ENCODE measurements at regions of chr18 and their contacts with region 1.

Region 1: GRCh38 chr18:75209129-75209950 is at the start of gene PTGR3:
- DNase-seq: peak; percentile 90
- H3K4me3 Mint-ChIP-seq: peak within 1 kb of the TSS; percentile 98
- H3K27ac Mint-ChIP-seq: peak within 1 kb of the TSS; percentile 92
- H3K4me1 Mint-ChIP-seq: peaks cover 40% of the 10 kb centered on the region
- H3K27me3 Mint-ChIP-seq: no peaks in the 10 kb centered on the region
- CTCF ChIP-seq: no peak
- total RNA-seq, gene PTGR3: 19.8 and 20.6 TPM in 2 replicates

Region 2: DNA sequence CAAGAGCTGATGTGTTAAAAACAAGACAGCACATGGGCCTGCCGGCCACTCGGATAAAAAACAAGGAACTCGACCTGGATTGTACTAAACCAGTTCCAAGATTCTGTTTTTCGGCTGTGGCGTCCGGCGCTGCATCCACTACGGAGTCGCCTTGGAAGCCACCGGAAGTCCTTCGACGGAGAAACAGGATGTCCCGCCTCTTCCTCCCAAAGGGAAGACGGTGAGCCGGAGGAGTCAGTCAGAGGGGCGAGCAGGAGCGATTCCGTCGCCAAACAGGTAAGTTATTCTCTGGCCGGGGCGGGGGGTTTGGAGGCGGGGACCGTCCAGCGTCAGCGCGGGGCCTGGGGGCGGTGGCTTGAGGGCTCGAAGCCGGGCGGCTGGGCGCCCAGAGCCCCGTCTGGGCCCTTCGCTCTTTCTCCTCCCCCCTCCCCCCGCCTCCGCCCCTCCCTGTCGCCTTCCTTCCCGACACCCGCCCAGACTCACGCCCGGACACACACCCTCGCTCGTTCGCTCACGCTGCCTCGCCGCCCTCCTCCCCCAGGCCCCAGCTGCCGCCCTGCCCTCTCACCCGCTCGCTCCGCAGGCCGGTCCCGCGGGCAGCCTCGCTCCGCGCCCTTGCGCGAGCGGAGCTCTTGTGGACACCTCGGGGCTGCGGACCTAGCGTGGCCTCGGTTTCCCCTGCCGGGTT is 611.5 kb before region 1 on chr18 and contains the start of gene ZNF407:
- CTCF ChIA-PET with region 1: no interaction called
- POLR2A ChIA-PET with region 1: interaction called, 28 read pairs
- intact Hi-C with region 1: no loop called
- DNase-seq: peak; percentile 93
- H3K4me3 Mint-ChIP-seq: peak within 1 kb of the TSS; percentile 85
- H3K27ac Mint-ChIP-seq: peak within 1 kb of the TSS; percentile 99
- H3K4me1 Mint-ChIP-seq: no peaks in the 10 kb centered on the region
- H3K27me3 Mint-ChIP-seq: no peaks in the 10 kb centered on the region
- CTCF ChIP-seq: no peak
- total RNA-seq, gene ZNF407: 9.5 and 9.9 TPM in 2 replicates

Region 3: DNA sequence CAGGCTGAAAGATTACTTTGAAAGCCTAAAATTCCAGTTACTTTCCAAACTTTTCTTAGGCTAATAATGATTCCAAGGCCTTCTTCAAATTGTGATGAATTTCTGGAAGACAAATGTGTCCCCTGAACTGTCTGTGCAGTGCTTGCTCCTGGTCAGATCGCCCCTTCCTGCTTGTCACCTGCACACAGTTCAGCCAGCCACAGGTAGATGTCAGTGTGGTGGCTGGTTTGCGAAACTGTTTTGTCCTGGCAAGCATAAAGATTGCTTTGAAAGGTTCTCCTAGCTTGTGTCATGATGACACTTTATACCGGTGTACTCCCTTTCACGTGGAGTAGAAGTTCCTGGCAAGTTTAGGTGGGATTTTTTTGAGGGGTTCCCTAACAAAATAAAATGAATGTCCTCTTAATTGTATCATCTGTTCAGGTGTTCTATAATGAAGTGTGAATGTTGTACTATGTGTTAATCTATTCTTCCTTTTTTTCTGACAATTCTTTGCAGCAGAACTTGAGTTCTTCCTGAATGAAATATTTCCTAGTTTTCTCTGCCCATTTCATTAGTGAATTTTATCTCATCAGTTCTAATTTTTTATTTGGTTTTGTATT is 312.8 kb before region 1 on chr18:
- CTCF ChIA-PET with region 1: interaction called, 3 read pairs
- POLR2A ChIA-PET with region 1: interaction called, 4 read pairs
- intact Hi-C with region 1: loop called (anchors 10 kb)
- DNase-seq: peak; percentile 60
- H3K4me3 Mint-ChIP-seq: no peak overlapping the region
- H3K27ac Mint-ChIP-seq: no peak overlapping the region
- H3K4me1 Mint-ChIP-seq: peaks cover 19% of the 10 kb centered on the region
- H3K27me3 Mint-ChIP-seq: no peaks in the 10 kb centered on the region
- CTCF ChIP-seq: peak; percentile 52

Region 4: DNA sequence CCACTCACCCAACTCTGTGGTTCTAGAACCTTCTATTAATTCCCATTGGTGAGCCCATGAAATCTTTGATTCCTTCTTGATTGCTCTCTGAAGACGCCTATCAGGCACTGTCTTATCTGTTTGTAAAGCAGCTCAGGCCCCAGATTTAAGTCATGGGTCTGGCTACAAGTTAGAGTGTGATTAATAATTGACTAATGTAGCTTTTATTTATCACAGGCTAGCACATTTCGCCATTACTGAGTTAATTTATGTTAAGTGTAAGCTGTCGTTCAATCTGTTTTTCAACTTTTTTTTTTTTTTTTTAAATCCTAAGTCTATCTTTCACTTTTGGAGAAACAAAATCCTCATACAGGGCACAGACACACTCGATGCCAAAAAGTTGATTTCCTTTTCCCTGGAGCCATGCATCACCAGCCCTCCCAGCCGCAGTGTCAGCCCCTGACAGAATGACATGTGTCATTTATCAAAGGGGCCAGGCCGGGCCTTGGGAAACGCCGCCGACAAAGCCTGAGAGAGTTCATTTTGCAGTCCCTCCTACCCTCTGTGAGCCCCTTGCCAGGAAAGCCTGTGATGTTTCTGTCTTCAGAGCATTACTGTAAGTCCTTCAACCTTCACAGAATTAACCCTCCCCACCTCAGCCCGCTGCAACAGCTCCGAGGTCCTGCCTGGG is 17.1 kb after region 1 on chr18:
- CTCF ChIA-PET with region 1: interaction called, 3 read pairs
- POLR2A ChIA-PET with region 1: interaction called, 10 read pairs
- intact Hi-C with region 1: no loop called
- DNase-seq: no peak
- H3K4me3 Mint-ChIP-seq: no peak overlapping the region
- H3K27ac Mint-ChIP-seq: no peak overlapping the region
- H3K4me1 Mint-ChIP-seq: peaks cover 5% of the 10 kb centered on the region
- H3K27me3 Mint-ChIP-seq: no peaks in the 10 kb centered on the region
- CTCF ChIP-seq: no peak

Region 5: GRCh38 chr18:75358928-75359327 is 149.6 kb after region 1 on chr18:
- CTCF ChIA-PET with region 1: no interaction called
- POLR2A ChIA-PET with region 1: no interaction called
- intact Hi-C with region 1: no loop called
- DNase-seq: peak; percentile 17
- H3K4me3 Mint-ChIP-seq: no peak overlapping the region
- H3K27ac Mint-ChIP-seq: no peak overlapping the region
- H3K4me1 Mint-ChIP-seq: no peaks in the 10 kb centered on the region
- H3K27me3 Mint-ChIP-seq: peaks cover 11% of the 10 kb centered on the region
- CTCF ChIP-seq: no peak

Region 6: GRCh38 chr18:75408554-75409506 is 199.5 kb after region 1 on chr18:
- CTCF ChIA-PET with region 1: no interaction called
- POLR2A ChIA-PET with region 1: no interaction called
- intact Hi-C with region 1: loop called (anchors 2 kb)
- DNase-seq: peak; percentile 98
- H3K4me3 Mint-ChIP-seq: no peak overlapping the region
- H3K27ac Mint-ChIP-seq: peak overlapping the region; percentile 64
- H3K4me1 Mint-ChIP-seq: peaks cover 20% of the 10 kb centered on the region
- H3K27me3 Mint-ChIP-seq: no peaks in the 10 kb centered on the region
- CTCF ChIP-seq: no peak

Region 7: DNA sequence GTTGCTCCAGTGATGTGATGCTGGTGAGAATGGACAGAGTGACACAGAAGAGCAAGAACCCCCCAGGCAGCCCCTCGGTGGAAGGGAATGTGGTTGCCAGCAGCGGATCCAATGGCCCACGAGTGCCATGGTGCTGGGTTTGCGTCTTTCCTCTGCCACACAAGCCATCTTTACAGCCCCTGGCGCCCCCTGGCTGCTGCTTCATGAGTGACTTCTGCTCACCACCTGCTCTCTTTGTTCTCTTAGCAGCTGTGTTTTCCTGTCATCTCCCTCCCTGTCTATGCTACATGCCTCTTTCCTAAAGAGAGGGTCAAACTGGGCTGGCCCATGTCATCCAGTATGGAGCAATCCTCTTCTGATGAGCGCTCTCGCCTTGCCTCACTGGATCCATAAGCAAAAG is 518.1 kb after region 1 on chr18:
- CTCF ChIA-PET with region 1: no interaction called
- POLR2A ChIA-PET with region 1: no interaction called
- intact Hi-C with region 1: loop called (anchors 5 kb)
- DNase-seq: peak; percentile 69
- H3K4me3 Mint-ChIP-seq: no peak overlapping the region
- H3K27ac Mint-ChIP-seq: no peak overlapping the region
- H3K4me1 Mint-ChIP-seq: no peaks in the 10 kb centered on the region
- H3K27me3 Mint-ChIP-seq: no peaks in the 10 kb centered on the region
- CTCF ChIP-seq: peak; percentile 45

Region 8: DNA sequence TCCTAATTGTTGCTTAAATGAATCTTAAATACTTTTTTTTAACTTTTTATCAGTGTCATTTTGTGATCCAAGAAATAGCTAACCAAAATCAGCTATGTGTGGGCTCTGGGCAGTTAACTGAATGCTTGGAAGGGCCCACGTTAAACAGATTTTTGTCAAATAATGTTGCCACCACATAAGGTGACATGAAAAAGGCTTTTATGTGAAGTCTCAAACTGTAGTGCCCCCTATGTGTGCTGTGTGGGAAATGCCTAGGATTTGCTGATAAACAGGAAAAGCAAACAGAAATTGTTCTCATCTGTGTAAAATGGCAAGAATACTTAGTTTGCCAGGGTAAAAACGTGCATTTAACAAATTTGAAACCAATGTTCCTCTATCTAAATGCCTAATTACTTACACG is 1043.5 kb after region 1 on chr18:
- CTCF ChIA-PET with region 1: interaction called, 3 read pairs
- POLR2A ChIA-PET with region 1: interaction called, 3 read pairs
- intact Hi-C with region 1: loop called (anchors 2 kb)
- DNase-seq: peak; percentile 36
- H3K4me3 Mint-ChIP-seq: no peak overlapping the region
- H3K27ac Mint-ChIP-seq: no peak overlapping the region
- H3K4me1 Mint-ChIP-seq: no peaks in the 10 kb centered on the region
- H3K27me3 Mint-ChIP-seq: no peaks in the 10 kb centered on the region
- CTCF ChIP-seq: peak; percentile 63

Measured in MCF 10A (cell line).